ENCODE measurements at regions of chr5 and their contacts with region 1.

Region 1: GRCh38 chr5:159262859-159263567 is at the start of gene UBLCP1:
- DNase-seq: peak; percentile 65 to 88 (median 83)
- ATAC-seq: peak; percentile 91
- H3K4me3 ChIP-seq: peak within 1 kb of the TSS; percentile 76
- H3K4me3 Mint-ChIP-seq: peak within 1 kb of the TSS; percentile 89 to 99 (median 96)
- H3K27ac ChIP-seq: peak within 1 kb of the TSS; percentile 90
- H3K27ac Mint-ChIP-seq: peak within 1 kb of the TSS; percentile 97 to 100 (median 99)
- H3K4me1 ChIP-seq: peaks cover 8 to 17% of the 10 kb centered on the region in 2 donors
- H3K4me1 Mint-ChIP-seq: peaks cover 28 to 65% (median 52%) of the 10 kb centered on the region in 7 donors
- H3K27me3 ChIP-seq: no peaks in the 10 kb centered on the region
- H3K27me3 Mint-ChIP-seq: peaks cover 0 to 4% (median 0%) of the 10 kb centered on the region in 5 donors
- total RNA-seq, gene UBLCP1: 18.2 to 30.9 (median 30.2) TPM

Region 2: GRCh38 chr5:158670201-158670600 is 592.8 kb before region 1 on chr5:
- CTCF ChIA-PET with region 1: no interaction called
- POLR2A ChIA-PET with region 1: no interaction called
- intact Hi-C with region 1: no loop called
- DNase-seq: no peak
- ATAC-seq: no peak
- H3K4me3 ChIP-seq: no peak overlapping the region
- H3K4me3 Mint-ChIP-seq: no peak overlapping the region
- H3K27ac ChIP-seq: no peak overlapping the region
- H3K27ac Mint-ChIP-seq: no peak overlapping the region
- H3K4me1 ChIP-seq: no peaks in the 10 kb centered on the region
- H3K4me1 Mint-ChIP-seq: no peaks in the 10 kb centered on the region
- H3K27me3 ChIP-seq: no peaks in the 10 kb centered on the region
- H3K27me3 Mint-ChIP-seq: peaks cover 0 to 22% (median 9%) of the 10 kb centered on the region in 5 donors

Region 3: GRCh38 chr5:159120446-159120845 is 142.6 kb before region 1 on chr5:
- CTCF ChIA-PET with region 1: no interaction called
- POLR2A ChIA-PET with region 1: no interaction called
- intact Hi-C with region 1: loop called in 1 of 2 experiments (anchors 1 kb)
- DNase-seq: peak in 7 of 9 donors; percentile 41 to 80 (median 71)
- ATAC-seq: peak; percentile 84
- H3K4me3 ChIP-seq: peak overlapping the region; percentile 6
- H3K4me3 Mint-ChIP-seq: peak overlapping the region; percentile 48 to 88 (median 72)
- H3K27ac ChIP-seq: peak overlapping the region; percentile 22
- H3K27ac Mint-ChIP-seq: peak overlapping the region; percentile 86 to 96 (median 93)
- H3K4me1 ChIP-seq: peaks cover 7 to 17% of the 10 kb centered on the region in 2 donors
- H3K4me1 Mint-ChIP-seq: peaks cover 9 to 26% (median 22%) of the 10 kb centered on the region in 7 donors
- H3K27me3 ChIP-seq: no peaks in the 10 kb centered on the region
- H3K27me3 Mint-ChIP-seq: peaks cover 0 to 14% (median 0%) of the 10 kb centered on the region in 5 donors

Region 4: DNA sequence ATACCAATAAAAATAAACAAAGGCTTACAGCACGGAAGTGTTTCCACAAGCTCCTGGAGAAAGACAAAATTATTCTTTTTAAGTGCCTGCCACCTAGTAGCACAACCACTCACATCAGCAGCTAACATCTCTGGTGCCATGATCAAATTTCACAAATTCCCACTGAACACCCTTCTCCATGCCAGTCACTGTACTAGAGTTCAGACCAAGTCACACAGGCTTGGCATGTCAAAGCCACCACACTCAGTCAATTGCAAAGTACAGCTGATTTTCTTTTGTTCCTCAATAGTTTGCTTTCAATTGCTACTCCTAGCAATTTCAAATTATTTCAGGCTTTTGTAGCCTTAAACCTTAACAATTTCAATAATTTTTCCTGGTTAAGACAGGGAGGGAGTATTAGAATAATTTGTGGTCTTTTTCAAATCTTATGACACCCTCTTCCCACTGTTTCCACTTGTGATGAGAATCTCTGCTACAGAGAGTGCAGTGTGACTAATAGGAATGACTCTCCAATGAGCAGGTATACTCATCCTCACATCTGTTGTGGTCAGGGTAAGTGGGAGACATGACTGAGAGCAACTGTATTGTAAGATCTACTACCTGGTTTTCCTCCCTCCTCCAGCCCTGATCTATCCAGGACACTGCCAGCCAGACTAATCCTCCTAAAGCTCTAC is 99.8 kb before region 1 on chr5:
- CTCF ChIA-PET with region 1: no interaction called
- POLR2A ChIA-PET with region 1: no interaction called
- intact Hi-C with region 1: no loop called
- DNase-seq: no peak
- ATAC-seq: no peak
- H3K4me3 ChIP-seq: no peak overlapping the region
- H3K4me3 Mint-ChIP-seq: no peak overlapping the region
- H3K27ac ChIP-seq: no peak overlapping the region
- H3K27ac Mint-ChIP-seq: peak overlapping the region in 8 of 9 donors; percentile 35 to 87 (median 72)
- H3K4me1 ChIP-seq: no peaks in the 10 kb centered on the region
- H3K4me1 Mint-ChIP-seq: peaks cover 5 to 38% (median 26%) of the 10 kb centered on the region in 7 donors
- H3K27me3 ChIP-seq: no peaks in the 10 kb centered on the region
- H3K27me3 Mint-ChIP-seq: no peaks in the 10 kb centered on the region

Region 5: DNA sequence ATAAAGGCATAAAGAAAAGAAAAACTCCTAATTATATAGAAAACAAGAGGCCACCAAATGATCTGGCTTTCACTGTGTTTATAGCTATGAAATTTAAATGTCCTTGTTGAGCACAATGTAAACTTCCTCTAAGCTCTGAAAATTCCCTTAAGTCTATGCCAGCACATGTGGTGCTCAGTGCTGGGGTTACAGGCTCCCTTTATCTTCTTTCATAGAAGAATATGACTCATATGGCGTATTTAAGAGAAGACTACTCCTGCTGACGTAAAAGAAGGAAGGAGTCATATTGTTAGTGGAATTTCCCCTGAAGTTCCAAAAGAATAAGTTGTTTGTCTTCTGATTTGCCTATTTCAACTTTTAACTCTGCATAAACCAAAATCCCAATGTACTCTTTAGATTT is 84.0 kb before region 1 on chr5:
- CTCF ChIA-PET with region 1: no interaction called
- POLR2A ChIA-PET with region 1: no interaction called
- intact Hi-C with region 1: loop called in 1 of 2 experiments (anchors 2 kb)
- DNase-seq: peak in 1 of 9 donors; percentile 46
- ATAC-seq: peak; percentile 84
- H3K4me3 ChIP-seq: no peak overlapping the region
- H3K4me3 Mint-ChIP-seq: peak overlapping the region in 3 of 10 donors; percentile 18 to 77 (median 53)
- H3K27ac ChIP-seq: peak overlapping the region; percentile 48
- H3K27ac Mint-ChIP-seq: peak overlapping the region in 8 of 9 donors; percentile 60 to 93 (median 90)
- H3K4me1 ChIP-seq: peaks cover 0 to 22% of the 10 kb centered on the region in 2 donors
- H3K4me1 Mint-ChIP-seq: peaks cover 22 to 93% (median 83%) of the 10 kb centered on the region in 7 donors
- H3K27me3 ChIP-seq: no peaks in the 10 kb centered on the region
- H3K27me3 Mint-ChIP-seq: no peaks in the 10 kb centered on the region

Region 6: GRCh38 chr5:159241946-159242552 is 21.0 kb before region 1 on chr5:
- CTCF ChIA-PET with region 1: no interaction called
- POLR2A ChIA-PET with region 1: no interaction called
- intact Hi-C with region 1: loop called in 1 of 2 experiments (anchors 2 kb)
- DNase-seq: no peak
- ATAC-seq: no peak
- H3K4me3 ChIP-seq: no peak overlapping the region
- H3K4me3 Mint-ChIP-seq: peak overlapping the region in 7 of 10 donors; percentile 2 to 64 (median 32)
- H3K27ac ChIP-seq: no peak overlapping the region
- H3K27ac Mint-ChIP-seq: peak overlapping the region in 2 of 9 donors; percentile 15 to 53
- H3K4me1 ChIP-seq: peaks cover 0 to 14% of the 10 kb centered on the region in 2 donors
- H3K4me1 Mint-ChIP-seq: peaks cover 8 to 36% (median 25%) of the 10 kb centered on the region in 7 donors
- H3K27me3 ChIP-seq: no peaks in the 10 kb centered on the region
- H3K27me3 Mint-ChIP-seq: peaks cover 0 to 6% (median 4%) of the 10 kb centered on the region in 5 donors

Region 7: GRCh38 chr5:159274676-159275075 is 11.7 kb after region 1 on chr5:
- CTCF ChIA-PET with region 1: interaction called, 5 read pairs
- POLR2A ChIA-PET with region 1: interaction called, 5 read pairs
- intact Hi-C with region 1: loop called in 1 of 2 experiments (anchors 1 kb)
- DNase-seq: no peak
- ATAC-seq: no peak
- H3K4me3 ChIP-seq: no peak overlapping the region
- H3K4me3 Mint-ChIP-seq: peak overlapping the region in 4 of 10 donors; percentile 16 to 44 (median 32)
- H3K27ac ChIP-seq: no peak overlapping the region
- H3K27ac Mint-ChIP-seq: peak overlapping the region in 5 of 9 donors; percentile 6 to 55 (median 29)
- H3K4me1 ChIP-seq: no peaks in the 10 kb centered on the region
- H3K4me1 Mint-ChIP-seq: peaks cover 2 to 57% (median 26%) of the 10 kb centered on the region in 7 donors
- H3K27me3 ChIP-seq: no peaks in the 10 kb centered on the region
- H3K27me3 Mint-ChIP-seq: no peaks in the 10 kb centered on the region

Region 8: GRCh38 chr5:160008877-160009590 is 746.0 kb after region 1 on chr5 and contains the start of gene TTC1:
- CTCF ChIA-PET with region 1: no interaction called
- POLR2A ChIA-PET with region 1: interaction called, 3 read pairs
- intact Hi-C with region 1: loop called (anchors 1 kb)
- DNase-seq: peak; percentile 71 to 96 (median 91)
- ATAC-seq: peak; percentile 99
- H3K4me3 ChIP-seq: peak within 1 kb of the TSS; percentile 84
- H3K4me3 Mint-ChIP-seq: peak within 1 kb of the TSS; percentile 93 to 99 (median 96)
- H3K27ac ChIP-seq: peak within 1 kb of the TSS; percentile 85
- H3K27ac Mint-ChIP-seq: peak within 1 kb of the TSS; percentile 91 to 99 (median 97)
- H3K4me1 ChIP-seq: peaks cover 9 to 13% of the 10 kb centered on the region in 2 donors
- H3K4me1 Mint-ChIP-seq: peaks cover 19 to 40% (median 31%) of the 10 kb centered on the region in 7 donors
- H3K27me3 ChIP-seq: no peaks in the 10 kb centered on the region
- H3K27me3 Mint-ChIP-seq: peaks cover 0 to 3% (median 0%) of the 10 kb centered on the region in 5 donors
- total RNA-seq, gene TTC1: 24.3 to 56.5 (median 41.7) TPM

Region 9: GRCh38 chr5:160418561-160419457 is 1155.8 kb after region 1 on chr5 and contains the start of gene SLU7:
- CTCF ChIA-PET with region 1: no interaction called
- POLR2A ChIA-PET with region 1: no interaction called
- intact Hi-C with region 1: loop called (anchors 2 to 10 kb)
- DNase-seq: peak; percentile 80 to 93 (median 91)
- ATAC-seq: peak; percentile 86
- H3K4me3 ChIP-seq: peak within 1 kb of the TSS; percentile 94
- H3K4me3 Mint-ChIP-seq: peak within 1 kb of the TSS; percentile 91 to 100 (median 96)
- H3K27ac ChIP-seq: peak within 1 kb of the TSS; percentile 98
- H3K27ac Mint-ChIP-seq: peak within 1 kb of the TSS; percentile 95 to 100 (median 98)
- H3K4me1 ChIP-seq: peaks cover 23 to 28% of the 10 kb centered on the region in 2 donors
- H3K4me1 Mint-ChIP-seq: peaks cover 45 to 85% (median 79%) of the 10 kb centered on the region in 7 donors
- H3K27me3 ChIP-seq: no peaks in the 10 kb centered on the region
- H3K27me3 Mint-ChIP-seq: no peaks in the 10 kb centered on the region
- total RNA-seq, gene SLU7: 53.0 to 85.3 (median 77.0) TPM

Measured in naive thymus-derived CD4-positive, alpha-beta T cell (primary cell).